ENCODE measurements at regions of chr2 and their contacts with region 1.

Region 1: DNA sequence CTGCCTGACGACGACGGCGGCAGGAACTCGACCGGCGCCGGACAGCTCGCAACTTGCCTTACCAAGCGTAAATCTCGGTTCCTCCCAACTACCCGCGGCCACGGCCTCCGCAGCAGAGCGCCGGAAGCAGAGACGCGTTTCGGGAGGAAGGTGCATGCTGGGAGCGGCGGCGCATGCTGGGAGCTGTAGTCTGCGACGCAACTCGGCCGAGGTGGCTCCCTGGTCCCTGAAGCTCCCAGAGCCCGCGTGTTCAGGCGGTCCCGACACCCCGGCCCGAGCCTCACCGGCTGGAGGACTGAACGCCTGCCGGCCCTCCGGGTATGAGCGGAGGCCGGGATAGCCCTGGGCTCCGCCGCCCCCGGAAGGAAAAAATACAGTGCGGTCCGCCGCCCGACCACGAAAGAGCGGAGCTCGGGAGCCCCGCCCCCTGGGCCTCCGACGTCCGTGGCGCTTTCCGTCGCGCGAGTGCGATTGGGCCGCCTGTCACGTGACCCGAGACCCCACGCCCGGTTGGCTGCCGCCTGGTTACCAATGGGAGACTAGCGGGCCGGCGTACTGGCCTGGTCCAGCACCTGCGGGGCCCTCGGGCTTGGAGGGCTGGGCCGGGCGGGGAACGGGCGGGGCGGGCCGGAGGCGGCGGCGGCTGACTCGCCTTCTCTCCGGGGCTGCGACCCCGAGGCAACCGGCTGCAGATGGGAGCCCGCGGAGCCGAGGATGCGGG is at the start of gene CAPN10:
- DNase-seq: peak; percentile 98 to 99
- ATAC-seq: peak; percentile 93 to 95
- H3K4me3 ChIP-seq: peak within 1 kb of the TSS; percentile 74 to 98 (median 92)
- H3K27ac ChIP-seq: peak within 1 kb of the TSS; percentile 91 to 98 (median 96)
- H3K4me1 ChIP-seq: peaks cover 32 to 35% of the 10 kb centered on the region in 2 donors
- H3K27me3 ChIP-seq: no peaks in the 10 kb centered on the region
- CTCF ChIP-seq: peak in 2 of 5 experiments; percentile 43 to 54
- POLR2A ChIP-seq: peak; percentile 80 to 83
- total RNA-seq, gene CAPN10: 6.8 to 12.2 (median 7.5) TPM

Region 2: GRCh38 chr2:240021488-240022104 is 564.8 kb before region 1 on chr2:
- in situ Hi-C with region 1: no loop called
- intact Hi-C with region 1: loop called (anchors 10 kb)
- DNase-seq: peak in 1 of 2 donors; percentile 56
- ATAC-seq: peak in 1 of 2 donors; percentile 22
- H3K4me3 ChIP-seq: no peak overlapping the region
- H3K27ac ChIP-seq: no peak overlapping the region
- H3K4me1 ChIP-seq: peaks cover 17 to 31% of the 10 kb centered on the region in 2 donors
- H3K27me3 ChIP-seq: no peaks in the 10 kb centered on the region
- CTCF ChIP-seq: peak; percentile 37 to 80 (median 64)
- POLR2A ChIP-seq: no peak

Region 3: GRCh38 chr2:240560480-240561326 is 25.7 kb before region 1 on chr2:
- in situ Hi-C with region 1: no loop called
- intact Hi-C with region 1: loop called (anchors 1 kb)
- DNase-seq: peak; percentile 99
- ATAC-seq: peak; percentile 85 to 86
- H3K4me3 ChIP-seq: peak overlapping the region; percentile 77 to 94 (median 88)
- H3K27ac ChIP-seq: peak overlapping the region; percentile 97 to 100 (median 100)
- H3K4me1 ChIP-seq: peaks cover 31 to 40% of the 10 kb centered on the region in 2 donors
- H3K27me3 ChIP-seq: no peaks in the 10 kb centered on the region
- CTCF ChIP-seq: peak in 2 of 5 experiments; percentile 49 to 60
- POLR2A ChIP-seq: peak; percentile 86 to 91

Region 4: GRCh38 chr2:240566203-240567136 is 19.9 kb before region 1 on chr2:
- in situ Hi-C with region 1: no loop called
- intact Hi-C with region 1: loop called (anchors 1 kb)
- DNase-seq: peak; percentile 81 to 87
- ATAC-seq: peak; percentile 46 to 51
- H3K4me3 ChIP-seq: peak overlapping the region; percentile 73 to 78 (median 76)
- H3K27ac ChIP-seq: peak overlapping the region; percentile 95 to 98 (median 96)
- H3K4me1 ChIP-seq: peaks cover 43 to 45% of the 10 kb centered on the region in 2 donors
- H3K27me3 ChIP-seq: no peaks in the 10 kb centered on the region
- CTCF ChIP-seq: peak; percentile 46 to 97 (median 84)
- POLR2A ChIP-seq: peak; percentile 55 to 59

Region 5: DNA sequence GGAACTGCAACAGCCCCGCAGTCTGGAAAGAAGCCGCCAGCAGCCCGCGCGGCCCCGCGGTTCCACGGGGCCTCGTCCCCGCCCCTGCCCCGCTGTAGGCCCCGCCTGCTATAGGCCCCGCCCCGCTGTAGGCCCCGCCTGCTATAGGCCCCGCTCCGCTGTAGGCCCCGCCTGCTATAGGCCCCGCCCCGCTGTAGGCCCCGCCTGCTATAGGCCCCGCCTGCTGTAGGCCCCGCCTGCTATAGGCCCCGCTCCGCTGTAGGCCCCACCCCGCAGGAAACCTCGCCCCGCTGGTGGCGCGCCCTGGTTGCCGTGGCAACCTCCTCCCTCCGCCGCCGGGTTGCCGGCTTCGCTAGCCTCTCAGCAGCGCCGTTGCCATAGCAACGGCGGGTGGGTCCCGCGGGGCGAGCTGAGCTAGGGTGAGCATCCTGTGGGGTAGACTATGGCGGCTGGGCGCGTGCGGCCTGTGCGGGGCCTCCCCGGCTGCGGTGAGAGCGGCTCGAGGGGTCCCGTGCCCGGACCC is 245.9 kb after region 1 on chr2:
- in situ Hi-C with region 1: no loop called
- intact Hi-C with region 1: loop called (anchors 10 kb)
- DNase-seq: peak; percentile 63 to 75
- ATAC-seq: peak; percentile 57 to 67
- H3K4me3 ChIP-seq: peak overlapping the region; percentile 42 to 53 (median 46)
- H3K27ac ChIP-seq: no peak overlapping the region
- H3K4me1 ChIP-seq: peaks cover 6 to 15% of the 10 kb centered on the region in 2 donors
- H3K27me3 ChIP-seq: peaks cover 13 to 38% (median 36%) of the 10 kb centered on the region in 3 donors
- CTCF ChIP-seq: no peak
- POLR2A ChIP-seq: no peak

Region 6: GRCh38 chr2:240998120-240998994 is 412.0 kb after region 1 on chr2 and contains the start of gene SNED1:
- in situ Hi-C with region 1: no loop called
- intact Hi-C with region 1: loop called (anchors 5 kb)
- DNase-seq: peak; percentile 87 to 89
- ATAC-seq: peak; percentile 61 to 79
- H3K4me3 ChIP-seq: peak within 1 kb of the TSS; percentile 63 to 98 (median 73)
- H3K27ac ChIP-seq: peak within 1 kb of the TSS; percentile 95 to 99 (median 96)
- H3K4me1 ChIP-seq: peaks cover 41 to 51% of the 10 kb centered on the region in 2 donors
- H3K27me3 ChIP-seq: no peaks in the 10 kb centered on the region
- CTCF ChIP-seq: no peak
- POLR2A ChIP-seq: peak; percentile 92 to 98
- total RNA-seq, gene SNED1: 16.4 to 56.2 (median 43.5) TPM

Region 7: GRCh38 chr2:241637000-241637791 is 1050.8 kb after region 1 on chr2 and contains the starts of genes ATG4B and THAP4:
- in situ Hi-C with region 1: no loop called
- intact Hi-C with region 1: loop called (anchors 10 kb)
- DNase-seq: peak; percentile 70 to 81
- ATAC-seq: peak; percentile 90 to 91
- H3K4me3 ChIP-seq: peak within 1 kb of the TSS; percentile 73 to 95 (median 92)
- H3K27ac ChIP-seq: peak within 1 kb of the TSS; percentile 92 to 100 (median 98)
- H3K4me1 ChIP-seq: peaks cover 36 to 49% of the 10 kb centered on the region in 2 donors
- H3K27me3 ChIP-seq: no peaks in the 10 kb centered on the region
- CTCF ChIP-seq: peak in 1 of 5 experiments; percentile 51
- POLR2A ChIP-seq: peak; percentile 65 to 74
- total RNA-seq, gene ATG4B: 32.0 to 57.5 (median 49.8) TPM
- total RNA-seq, gene THAP4: 71.3 to 83.3 (median 79.9) TPM